ENCODE measurements at regions of chr6 and their contacts with region 1.

Region 1: DNA sequence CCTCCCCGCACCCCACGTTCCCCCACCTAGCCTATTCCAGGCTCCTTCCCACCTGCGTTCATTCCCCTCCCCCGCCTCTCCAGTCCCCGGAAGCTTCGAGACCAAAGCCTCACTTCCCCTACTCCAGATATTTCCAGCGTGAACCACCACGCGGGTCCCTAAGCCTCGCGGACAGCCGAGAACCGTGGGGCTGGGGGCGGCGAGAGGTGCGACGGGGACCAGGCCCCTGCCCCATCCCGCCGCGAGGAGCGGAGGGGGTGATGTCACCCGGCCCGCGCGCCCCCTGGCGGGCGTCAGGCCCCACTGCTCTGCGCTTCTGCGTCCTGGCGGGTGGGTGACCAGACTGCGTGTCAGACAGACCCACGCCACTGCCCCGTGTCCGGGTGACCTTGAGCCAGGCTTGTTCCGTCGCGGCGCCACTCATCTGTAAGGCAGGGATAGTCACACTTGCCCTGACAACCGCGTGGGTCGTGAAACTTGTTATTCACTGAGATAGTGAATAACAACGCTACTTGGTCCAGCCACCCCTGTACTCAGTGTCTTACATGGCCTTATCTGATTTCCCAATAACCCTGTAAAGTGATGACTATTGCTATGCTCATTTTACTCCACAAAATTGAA is 9.0 kb upstream of the HSP90AB1 start:
- DNase-seq: peak; percentile 77
- ATAC-seq: peak; percentile 63
- H3K4me3 ChIP-seq: peak overlapping the region; percentile 75
- H3K27ac ChIP-seq: peak overlapping the region; percentile 73
- H3K4me1 ChIP-seq: peaks cover 39% of the 10 kb centered on the region
- H3K27me3 ChIP-seq: no peaks in the 10 kb centered on the region
- CTCF ChIP-seq: peak; percentile 97

Region 2: DNA sequence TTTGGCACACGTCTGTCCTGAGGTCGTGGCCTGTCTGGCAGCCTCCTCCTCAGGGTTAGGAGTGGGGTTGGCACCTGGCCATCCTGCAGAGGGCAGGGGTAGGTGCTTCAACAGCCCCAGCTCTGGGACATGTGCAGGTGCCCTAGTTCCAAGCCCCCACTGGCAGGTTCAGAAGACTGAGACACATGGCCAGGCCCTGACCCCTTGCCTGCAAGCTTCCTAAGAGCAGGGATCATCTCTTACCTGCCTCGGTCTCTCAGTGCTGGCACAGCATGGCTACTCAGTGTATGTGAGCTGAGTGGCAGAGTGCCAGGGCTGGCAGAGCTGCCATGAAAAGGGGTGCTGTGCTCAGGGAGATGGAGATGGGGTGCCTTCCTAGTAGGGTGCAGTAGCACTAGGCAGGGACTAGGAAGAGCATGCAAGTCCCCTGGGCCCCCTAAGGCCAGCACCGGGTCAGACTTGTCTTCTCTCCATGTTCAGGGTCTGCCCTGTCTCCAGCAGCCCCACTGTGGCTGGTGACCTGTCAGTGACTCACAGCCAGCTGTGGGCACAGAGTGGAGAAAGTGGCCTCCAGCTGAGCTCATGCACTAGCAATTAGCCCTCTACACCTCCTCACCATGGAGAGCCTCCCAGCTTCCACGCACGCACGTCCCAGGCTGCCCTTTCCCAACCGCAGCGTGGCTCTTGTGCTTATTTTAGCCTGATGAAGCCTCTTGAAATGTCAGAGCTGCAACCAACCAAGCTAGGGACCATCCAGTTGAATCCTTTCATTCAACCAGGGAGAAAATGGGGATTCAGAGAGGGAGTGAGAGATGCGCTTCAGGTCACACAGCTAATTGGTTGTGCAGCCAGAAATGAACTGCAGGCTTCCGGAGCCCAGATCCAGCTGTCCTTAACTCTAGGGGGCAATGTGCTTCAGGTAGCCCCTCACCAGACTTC is 227.2 kb before region 1 on chr6:
- CTCF ChIA-PET with region 1: no interaction called
- POLR2A ChIA-PET with region 1: no interaction called
- intact Hi-C with region 1: no loop called
- DNase-seq: peak; percentile 91
- ATAC-seq: peak; percentile 93
- H3K4me3 ChIP-seq: no peak overlapping the region
- H3K27ac ChIP-seq: peak overlapping the region; percentile 89
- H3K4me1 ChIP-seq: peaks cover 26% of the 10 kb centered on the region
- H3K27me3 ChIP-seq: no peaks in the 10 kb centered on the region
- CTCF ChIP-seq: no peak

Region 3: GRCh38 chr6:44116641-44117382 is 121.1 kb before region 1 on chr6:
- CTCF ChIA-PET with region 1: no interaction called
- POLR2A ChIA-PET with region 1: no interaction called
- intact Hi-C with region 1: loop called (anchors 5 kb)
- DNase-seq: peak; percentile 86
- ATAC-seq: peak; percentile 62
- H3K4me3 ChIP-seq: peak overlapping the region; percentile 49
- H3K27ac ChIP-seq: peak overlapping the region; percentile 93
- H3K4me1 ChIP-seq: peaks cover 68% of the 10 kb centered on the region
- H3K27me3 ChIP-seq: no peaks in the 10 kb centered on the region
- CTCF ChIP-seq: no peak

Region 4: GRCh38 chr6:44172731-44173500 is 65.0 kb before region 1 on chr6:
- CTCF ChIA-PET with region 1: no interaction called
- POLR2A ChIA-PET with region 1: no interaction called
- intact Hi-C with region 1: loop called (anchors 1 kb)
- DNase-seq: peak; percentile 89
- ATAC-seq: peak; percentile 99
- H3K4me3 ChIP-seq: no peak overlapping the region
- H3K27ac ChIP-seq: no peak overlapping the region
- H3K4me1 ChIP-seq: no peaks in the 10 kb centered on the region
- H3K27me3 ChIP-seq: no peaks in the 10 kb centered on the region
- CTCF ChIP-seq: peak; percentile 97

Region 5: GRCh38 chr6:44221291-44221960 is 16.5 kb before region 1 on chr6:
- CTCF ChIA-PET with region 1: interaction called, 9 read pairs
- POLR2A ChIA-PET with region 1: interaction called, 3 read pairs
- intact Hi-C with region 1: loop called (anchors 1 kb)
- DNase-seq: peak; percentile 81
- ATAC-seq: peak; percentile 45
- H3K4me3 ChIP-seq: no peak overlapping the region
- H3K27ac ChIP-seq: no peak overlapping the region
- H3K4me1 ChIP-seq: peaks cover 29% of the 10 kb centered on the region
- H3K27me3 ChIP-seq: no peaks in the 10 kb centered on the region
- CTCF ChIP-seq: peak; percentile 78